AG04450 (cell line): ENCODE measurements at regions of chr11 and their contacts with region 1.

Region 1: DNA sequence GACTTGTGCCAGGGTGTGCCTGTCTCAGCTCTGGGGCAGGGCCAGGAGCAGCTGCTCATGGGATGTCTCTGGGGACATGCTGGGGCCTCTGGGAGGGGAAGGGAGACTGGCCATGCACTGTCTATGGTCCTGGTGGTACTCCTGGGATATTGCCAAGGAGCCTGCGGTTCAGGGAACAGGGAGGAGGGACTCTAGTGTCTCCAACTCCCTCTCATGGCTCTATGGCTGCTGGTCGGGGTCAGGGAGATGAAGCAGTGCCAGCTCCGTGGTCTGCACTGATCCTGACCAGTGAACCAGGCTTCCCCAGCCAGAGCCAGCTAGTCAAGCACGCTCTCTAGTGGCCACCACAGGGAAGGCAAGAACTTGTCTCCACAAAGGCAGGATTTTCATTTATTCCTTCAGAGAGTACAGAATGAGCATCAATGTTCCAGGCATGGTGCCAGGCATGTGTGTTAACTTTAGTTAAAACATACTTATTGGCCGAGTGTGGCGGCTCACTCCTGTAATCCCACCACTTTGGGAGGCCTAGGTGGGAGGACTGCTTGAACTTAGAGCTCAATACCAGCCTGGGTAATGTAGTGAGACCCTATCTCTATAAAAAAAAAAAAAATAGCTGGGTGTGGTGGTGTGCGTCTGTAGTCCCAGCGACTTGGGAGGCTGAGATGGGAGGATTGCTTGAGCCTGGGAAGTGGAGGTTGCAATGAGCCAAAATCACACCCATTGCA is 2.5 kb upstream of the BEST1 start:
- DNase-seq: no peak
- H3K4me3 ChIP-seq: no peak overlapping the region
- H3K27ac ChIP-seq: no peak overlapping the region
- H3K27me3 ChIP-seq: peaks cover 13% of the 10 kb centered on the region
- CTCF ChIP-seq: peak; percentile 99

Region 2: DNA sequence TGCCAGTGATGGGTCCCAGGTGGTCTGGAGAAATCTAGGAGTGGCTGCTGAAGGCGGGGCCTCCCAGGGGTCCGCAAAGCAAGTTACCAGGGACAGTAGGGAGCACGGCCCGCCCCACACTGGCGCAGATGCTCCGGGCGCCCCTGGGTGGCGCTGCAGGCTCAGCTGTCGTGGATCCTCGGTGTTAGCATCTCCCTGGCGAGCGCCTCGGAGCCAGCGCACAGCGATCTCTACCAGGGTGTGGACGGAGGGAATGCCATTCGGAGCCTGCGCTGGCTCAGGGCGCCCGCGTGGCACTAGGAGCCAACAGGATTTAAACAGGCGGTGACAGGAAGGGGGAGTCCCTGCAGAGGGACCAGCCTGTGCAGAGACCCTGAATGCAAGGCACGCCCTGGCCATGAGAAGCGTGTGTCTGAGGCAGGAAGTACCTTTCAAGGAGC is 76.5 kb before region 1 on chr11:
- CTCF ChIA-PET with region 1: interaction called, 37 read pairs
- POLR2A ChIA-PET with region 1: interaction called, 7 read pairs
- DNase-seq: peak; percentile 36
- H3K4me3 ChIP-seq: peak overlapping the region; percentile 43
- H3K27ac ChIP-seq: no peak overlapping the region
- H3K27me3 ChIP-seq: peaks cover 2% of the 10 kb centered on the region
- CTCF ChIP-seq: peak; percentile 91

Region 3: GRCh38 chr11:61923166-61924063 is 24.2 kb before region 1 on chr11:
- CTCF ChIA-PET with region 1: interaction called, 56 read pairs
- POLR2A ChIA-PET with region 1: no interaction called
- DNase-seq: peak; percentile 34
- H3K4me3 ChIP-seq: no peak overlapping the region
- H3K27ac ChIP-seq: peak overlapping the region; percentile 73
- H3K27me3 ChIP-seq: peaks cover 16% of the 10 kb centered on the region
- CTCF ChIP-seq: no peak

Region 4: GRCh38 chr11:61928606-61929005 is 19.0 kb before region 1 on chr11:
- CTCF ChIA-PET with region 1: interaction called, 56 read pairs
- POLR2A ChIA-PET with region 1: no interaction called
- DNase-seq: no peak
- H3K4me3 ChIP-seq: no peak overlapping the region
- H3K27ac ChIP-seq: no peak overlapping the region
- H3K27me3 ChIP-seq: peaks cover 2% of the 10 kb centered on the region
- CTCF ChIP-seq: no peak

Region 5: GRCh38 chr11:61961570-61962212 is 14.0 kb after region 1 on chr11:
- CTCF ChIA-PET with region 1: interaction called, 14 read pairs
- POLR2A ChIA-PET with region 1: interaction called, 32 read pairs
- DNase-seq: no peak
- H3K4me3 ChIP-seq: no peak overlapping the region
- H3K27ac ChIP-seq: peak overlapping the region; percentile 11
- H3K27me3 ChIP-seq: no peaks in the 10 kb centered on the region
- CTCF ChIP-seq: no peak

Region 6: DNA sequence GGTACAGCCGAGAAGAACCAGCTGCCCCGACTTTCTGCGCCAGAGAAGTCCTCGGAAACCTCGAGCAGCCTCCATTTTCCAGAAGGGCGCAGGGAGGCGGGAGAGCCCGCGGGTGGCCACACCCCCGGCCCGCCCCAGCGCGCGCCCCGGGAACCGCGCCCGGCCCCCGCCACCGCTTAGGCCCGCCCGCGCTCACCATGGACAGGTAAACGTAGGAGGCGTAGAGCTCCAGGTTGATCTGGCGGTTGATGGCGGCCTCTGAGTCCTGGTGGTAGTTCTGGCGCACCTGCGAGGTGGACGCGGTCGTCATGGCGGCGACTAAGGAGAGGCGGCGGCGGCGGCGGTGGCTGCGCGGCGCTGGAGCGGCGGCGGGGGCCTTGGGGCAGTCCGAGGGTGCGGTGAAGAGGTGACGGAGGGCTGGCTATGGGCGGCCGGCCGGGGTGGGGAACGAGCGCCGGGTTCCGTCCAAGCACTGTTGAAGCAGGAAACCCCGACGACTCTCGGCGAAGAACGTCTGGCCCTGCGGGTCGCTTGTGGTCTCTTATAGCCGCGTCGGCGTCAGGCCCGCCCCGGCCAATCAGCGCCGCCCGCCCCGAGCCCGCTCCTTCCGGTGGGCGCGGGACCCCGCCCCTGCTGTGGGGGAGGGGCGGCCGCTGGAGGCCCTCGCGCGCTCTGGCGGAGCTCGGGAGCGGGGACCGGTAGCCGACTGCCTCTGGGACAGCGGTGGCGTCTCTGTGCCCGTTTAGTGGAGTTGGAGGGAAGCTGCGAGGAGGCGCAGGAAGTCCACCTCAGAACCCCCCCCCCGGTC is 19.7 kb after region 1 on chr11 and contains the start of gene FTH1:
- CTCF ChIA-PET with region 1: interaction called, 14 read pairs
- POLR2A ChIA-PET with region 1: interaction called, 32 read pairs
- DNase-seq: peak; percentile 77
- H3K4me3 ChIP-seq: peak within 1 kb of the TSS; percentile 100
- H3K27ac ChIP-seq: peak within 1 kb of the TSS; percentile 88
- H3K27me3 ChIP-seq: no peaks in the 10 kb centered on the region
- CTCF ChIP-seq: no peak
- polyA plus RNA-seq, gene FTH1: 3,294 and 4,220 TPM in 2 replicates

Region 7: DNA sequence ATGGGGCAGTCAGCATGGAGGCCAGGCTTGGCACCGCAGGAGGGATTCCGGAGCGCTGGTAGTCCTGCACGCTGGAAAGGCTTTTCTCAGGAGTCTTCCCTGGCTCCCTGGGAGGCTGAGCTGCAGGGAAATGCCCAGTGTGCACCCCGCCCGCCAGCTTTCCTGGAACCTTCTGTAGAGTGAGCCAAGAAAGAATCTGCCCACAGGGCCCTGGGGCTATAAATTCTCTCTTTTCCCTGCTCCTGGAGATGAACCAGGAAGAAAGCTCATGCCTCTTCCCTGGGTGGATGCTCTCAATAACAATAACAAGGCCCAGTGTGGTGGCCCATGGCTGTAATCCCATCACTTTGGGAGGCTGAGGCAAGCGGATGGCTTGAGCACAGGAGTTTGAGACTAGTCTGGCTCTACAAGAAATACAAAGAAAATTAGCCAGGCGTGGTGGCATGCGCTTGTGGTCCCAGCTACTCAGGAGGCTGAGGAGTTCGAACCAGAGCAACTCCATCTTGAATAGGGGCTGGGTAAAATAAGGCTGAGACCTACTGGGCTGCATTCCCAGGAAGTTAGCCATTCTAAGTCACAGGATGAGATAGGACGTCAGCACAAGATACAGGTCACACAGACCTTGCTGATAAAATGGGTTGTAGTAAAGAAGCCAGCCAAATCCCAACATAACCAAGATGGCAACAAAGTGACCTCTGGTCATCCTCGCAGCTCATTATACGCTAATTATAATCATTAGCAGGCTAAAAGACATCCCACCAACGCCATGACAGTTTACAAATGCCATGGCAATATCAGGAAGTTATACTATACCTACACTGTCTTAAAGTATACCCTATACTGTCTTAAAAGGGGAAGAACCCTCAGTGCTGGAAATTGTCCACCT is 66.2 kb after region 1 on chr11:
- CTCF ChIA-PET with region 1: no interaction called
- POLR2A ChIA-PET with region 1: no interaction called
- DNase-seq: no peak
- H3K4me3 ChIP-seq: no peak overlapping the region
- H3K27ac ChIP-seq: no peak overlapping the region
- H3K27me3 ChIP-seq: no peaks in the 10 kb centered on the region
- CTCF ChIP-seq: no peak